ENCODE measurements at regions of chr4 and their contacts with region 1.

Region 1: DNA sequence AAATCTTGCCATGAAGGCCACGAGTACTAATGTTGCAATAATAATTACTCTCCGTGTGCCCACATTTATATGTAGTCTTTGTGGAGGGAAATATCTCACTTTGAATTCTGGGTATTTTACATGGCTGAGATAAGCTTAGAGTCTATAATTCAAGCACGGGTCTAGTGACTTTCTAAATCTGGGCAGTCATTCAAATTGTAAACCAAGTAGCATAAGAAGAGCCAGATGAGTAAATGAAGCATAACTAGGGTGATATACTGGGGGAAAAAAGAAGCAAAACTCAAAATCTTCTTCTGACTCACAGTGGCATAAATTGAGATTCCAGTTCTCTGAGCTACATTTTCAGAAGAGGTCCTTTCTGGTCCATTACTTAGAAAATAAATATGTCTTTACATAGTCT is 53.0 kb downstream of the MAPK10 start:
- DNase-seq: no peak
- ATAC-seq: no peak
- H3K4me3 Mint-ChIP-seq: no peak overlapping the region
- H3K27ac Mint-ChIP-seq: no peak overlapping the region
- H3K4me1 Mint-ChIP-seq: no peaks in the 10 kb centered on the region
- H3K27me3 Mint-ChIP-seq: no peaks in the 10 kb centered on the region

Region 2: DNA sequence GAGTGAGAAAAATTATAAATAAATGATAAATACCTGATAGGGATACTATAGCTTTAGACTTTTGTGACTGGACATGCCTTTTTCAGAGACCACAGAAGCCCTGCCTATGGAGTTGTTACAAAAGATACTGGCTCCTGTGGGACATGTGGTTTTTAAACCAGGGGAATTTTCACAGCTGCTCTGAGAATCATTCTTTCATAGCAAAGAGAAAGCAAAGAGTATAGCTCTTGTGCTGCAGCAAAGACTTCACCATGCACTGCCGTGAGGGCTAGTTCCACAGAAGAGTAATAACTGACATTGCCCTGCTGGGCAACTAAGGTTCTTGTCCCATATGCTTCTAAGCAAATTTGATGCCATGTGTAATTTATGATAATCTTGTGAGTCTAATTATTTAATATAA is 45.2 kb before region 1 on chr4:
- CTCF ChIA-PET with region 1: no interaction called
- POLR2A ChIA-PET with region 1: no interaction called
- intact Hi-C with region 1: loop called in 1 of 2 experiments (anchors 1 kb)
- DNase-seq: no peak
- ATAC-seq: no peak
- H3K4me3 Mint-ChIP-seq: no peak overlapping the region
- H3K27ac Mint-ChIP-seq: no peak overlapping the region
- H3K4me1 Mint-ChIP-seq: no peaks in the 10 kb centered on the region
- H3K27me3 Mint-ChIP-seq: no peaks in the 10 kb centered on the region

Region 3: DNA sequence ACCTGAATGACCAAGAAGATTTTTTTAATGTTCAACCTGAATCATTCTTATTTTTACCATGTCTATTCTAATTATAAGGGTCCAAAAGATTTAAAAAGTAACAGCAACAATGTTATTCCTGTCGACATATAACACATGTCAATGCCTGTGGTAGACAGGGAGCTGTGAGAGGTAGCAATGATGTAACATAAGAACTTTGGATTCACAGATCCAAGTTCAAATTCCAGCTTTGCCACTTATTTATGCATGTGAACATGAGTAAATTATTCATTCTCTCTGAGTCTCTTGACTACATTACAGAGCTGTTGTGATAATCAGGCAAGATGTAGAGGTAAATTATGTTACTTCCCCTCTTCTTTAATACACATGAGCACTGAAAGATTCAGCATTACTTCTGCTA is 859.1 kb after region 1 on chr4:
- CTCF ChIA-PET with region 1: no interaction called
- POLR2A ChIA-PET with region 1: no interaction called
- intact Hi-C with region 1: no loop called
- DNase-seq: no peak
- ATAC-seq: no peak
- H3K4me3 Mint-ChIP-seq: no peak overlapping the region
- H3K27ac Mint-ChIP-seq: no peak overlapping the region
- H3K4me1 Mint-ChIP-seq: peaks cover 8% of the 10 kb centered on the region
- H3K27me3 Mint-ChIP-seq: no peaks in the 10 kb centered on the region

Measured in activated CD4-positive, alpha-beta T cell treated with anti-CD3 and anti-CD28 coated beads for 36 hours (primary cell).